ENCODE measurements at regions of chr5 and their contacts with region 1.

Region 1: GRCh38 chr5:154072414-154073171 is 33.8 kb downstream of the MFAP3 start:
- DNase-seq: peak; percentile 85

Region 2: DNA sequence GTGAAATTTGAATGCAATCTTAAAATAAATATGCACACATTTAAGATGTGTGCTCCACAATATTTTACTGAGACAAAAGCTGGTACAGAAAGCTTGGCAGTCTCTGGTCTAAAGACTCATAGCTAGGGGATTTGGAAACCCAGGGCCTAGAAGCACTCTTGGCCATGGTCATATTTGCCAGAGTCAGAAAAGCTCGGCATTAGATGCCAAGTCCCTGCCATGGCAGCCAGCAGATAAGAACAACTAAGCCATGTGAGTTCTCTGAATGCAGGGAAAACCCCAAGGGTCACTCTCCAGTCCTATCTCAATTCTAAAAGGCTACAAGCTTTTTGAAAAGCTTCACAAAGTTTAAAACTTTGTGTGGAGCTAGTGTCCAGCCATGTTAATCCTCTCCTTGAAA is 153.4 kb before region 1 on chr5:
- CTCF ChIA-PET with region 1: no interaction called
- POLR2A ChIA-PET with region 1: no interaction called
- DNase-seq: no peak

Region 3: DNA sequence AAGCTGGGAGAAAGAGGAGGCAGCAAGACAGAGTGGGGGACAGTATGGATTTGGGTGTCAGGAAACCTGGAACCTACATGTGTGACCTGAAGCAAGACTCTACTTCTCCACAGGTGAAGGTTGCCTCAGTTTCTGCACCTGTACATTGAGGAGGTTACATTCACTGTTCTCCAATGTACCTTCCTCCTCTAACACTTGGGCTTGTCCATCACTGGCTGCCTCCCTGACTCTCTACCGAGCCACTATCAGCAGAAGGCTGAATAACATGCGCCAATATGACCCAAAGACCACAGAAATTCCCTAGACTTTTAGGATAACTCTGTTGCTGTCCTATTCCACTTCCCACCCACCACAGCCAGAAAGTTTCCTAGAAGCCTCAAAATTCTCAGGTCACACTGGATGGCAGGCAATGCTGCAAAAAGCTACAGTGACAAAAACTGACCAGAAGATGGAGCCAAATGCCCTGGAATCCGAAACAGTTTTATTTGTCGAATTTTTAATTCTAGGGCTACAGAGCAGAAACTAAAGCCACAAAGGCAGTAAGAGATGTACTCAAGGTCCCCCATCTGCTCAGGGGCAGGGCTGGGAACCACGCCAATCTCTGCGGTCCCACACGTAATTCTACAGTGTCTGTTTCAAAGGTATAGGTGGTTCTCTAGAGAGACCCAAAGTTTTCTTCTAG is 98.3 kb before region 1 on chr5:
- CTCF ChIA-PET with region 1: interaction called, 12 read pairs
- POLR2A ChIA-PET with region 1: no interaction called
- DNase-seq: peak; percentile 59

Region 4: GRCh38 chr5:154058055-154059038 is 14.2 kb before region 1 on chr5:
- CTCF ChIA-PET with region 1: interaction called, 13 read pairs
- POLR2A ChIA-PET with region 1: no interaction called
- DNase-seq: peak; percentile 14

Region 5: DNA sequence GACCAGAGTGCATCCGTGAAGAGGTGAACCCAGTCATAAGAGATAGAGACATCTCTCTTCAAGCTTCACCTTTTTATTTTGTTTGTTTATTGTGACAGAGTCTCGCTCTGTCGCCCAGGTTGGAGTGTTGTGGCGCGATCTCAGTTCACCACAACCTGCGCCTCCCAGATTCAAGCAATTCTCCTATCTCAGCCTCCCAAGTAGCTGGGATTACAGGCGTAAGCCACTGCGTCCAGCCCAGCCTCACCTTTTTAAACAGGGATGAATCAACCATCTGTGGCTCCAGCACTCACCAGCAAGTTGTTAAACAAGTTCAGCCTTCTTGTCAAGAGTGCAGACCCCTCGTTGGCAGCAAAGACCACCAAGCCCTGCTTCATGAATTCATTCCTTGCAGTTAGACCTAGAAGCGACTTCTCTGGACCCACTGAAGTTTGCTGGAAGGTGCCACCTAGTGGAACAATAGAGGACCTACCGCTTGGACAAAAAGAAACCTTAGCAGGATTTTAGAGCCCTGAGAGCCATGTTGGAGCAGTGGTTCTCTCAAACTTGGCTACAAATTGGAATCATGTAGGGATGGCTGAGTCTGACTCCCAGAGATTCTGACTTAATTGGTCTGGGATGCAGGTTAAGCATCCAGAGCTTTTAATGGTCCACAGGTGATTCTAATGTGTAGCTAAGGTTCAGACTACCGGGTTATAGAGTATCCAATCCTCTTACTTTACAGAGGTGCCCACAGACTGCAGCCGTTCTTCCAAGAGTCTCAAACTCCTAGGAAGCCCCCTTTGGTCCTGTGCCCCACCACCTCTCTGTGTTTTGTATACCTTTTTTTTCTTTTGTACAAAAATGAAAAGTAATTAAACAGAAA is 107.5 kb after region 1 on chr5:
- CTCF ChIA-PET with region 1: interaction called, 27 read pairs
- POLR2A ChIA-PET with region 1: interaction called, 3 read pairs
- DNase-seq: peak; percentile 71

Region 6: GRCh38 chr5:154394307-154394706 is 321.7 kb after region 1 on chr5:
- CTCF ChIA-PET with region 1: no interaction called
- POLR2A ChIA-PET with region 1: no interaction called
- DNase-seq: no peak

Region 7: DNA sequence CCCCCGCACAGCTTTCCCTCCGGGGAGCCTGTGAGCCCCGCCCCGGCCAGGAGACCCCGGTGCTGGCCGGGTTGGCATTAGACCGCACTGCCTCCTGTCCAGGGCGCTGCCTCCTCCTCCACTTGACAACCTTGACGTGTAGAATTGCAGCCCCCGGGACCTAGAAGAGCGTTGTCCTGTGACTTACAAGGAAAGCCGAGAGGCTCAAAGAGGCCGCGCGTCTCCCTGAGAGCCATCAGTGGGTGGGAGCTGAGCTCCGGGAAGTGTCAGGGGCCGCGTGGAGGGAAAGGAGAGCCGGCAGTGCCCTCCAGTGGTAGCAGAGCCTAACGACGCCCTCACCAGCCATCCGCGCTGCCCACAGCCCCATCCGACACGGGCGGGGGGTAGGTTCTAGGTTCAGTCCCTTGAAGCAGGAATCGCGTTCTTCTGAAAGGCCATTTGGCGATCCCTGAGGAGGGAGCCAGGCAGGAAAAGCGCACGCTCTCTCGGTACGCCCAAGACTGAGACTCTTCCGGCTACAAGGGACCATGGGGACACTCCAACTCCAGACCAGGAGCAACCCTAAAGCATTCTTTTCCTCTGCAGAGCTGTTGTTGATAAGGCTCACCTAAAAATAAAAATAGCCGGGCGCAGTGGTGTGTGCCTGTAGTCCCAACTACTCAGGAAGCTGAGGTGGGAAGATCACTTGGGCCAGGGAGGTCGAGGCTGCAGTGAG is 332.6 kb after region 1 on chr5:
- CTCF ChIA-PET with region 1: interaction called, 42 read pairs
- POLR2A ChIA-PET with region 1: no interaction called
- DNase-seq: peak; percentile 91

Measured in HEK293T (cell line).